IMR-90 (cell line): ENCODE measurements at regions of chr4 and their contacts with region 1.

Region 1: DNA sequence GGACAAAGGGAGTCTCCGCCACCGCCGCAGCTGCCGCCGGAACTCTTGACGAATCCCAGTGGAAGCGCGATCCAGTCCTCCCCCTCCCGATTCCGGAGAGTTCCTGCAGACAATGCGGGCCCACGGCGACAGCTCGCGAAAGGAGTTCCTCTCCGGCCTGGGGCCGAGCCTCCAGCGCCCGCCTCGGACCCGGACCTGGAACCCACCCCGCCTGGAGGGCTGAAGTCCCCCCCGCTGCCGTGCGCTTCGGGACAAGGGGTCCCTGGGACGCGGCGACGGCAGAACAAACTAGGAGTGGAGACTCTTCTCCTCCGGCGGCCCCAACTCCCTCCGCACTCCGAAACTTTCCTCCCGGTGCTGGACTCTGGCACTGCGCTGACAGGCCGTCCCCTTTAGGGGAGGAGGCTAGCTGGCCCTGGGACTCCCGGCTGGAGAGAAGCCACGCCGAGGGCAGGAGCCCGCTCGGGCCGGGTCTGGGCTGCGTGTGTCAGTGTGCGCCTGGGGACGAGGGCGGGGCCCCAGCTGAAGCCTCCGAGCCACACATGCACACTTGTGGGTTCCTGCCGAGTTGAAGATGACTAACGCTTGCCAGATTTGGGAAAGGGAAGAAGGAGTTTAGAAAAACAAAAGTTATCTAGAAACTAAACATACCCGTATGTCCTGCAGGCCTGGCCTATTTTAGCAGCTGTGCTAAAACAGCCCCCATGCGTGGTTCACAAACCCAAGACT is at the start of gene ANTXR2:
- DNase-seq: peak; percentile 98
- ATAC-seq: peak; percentile 90
- H3K4me3 ChIP-seq: peak within 1 kb of the TSS; percentile 85
- H3K27ac ChIP-seq: peak within 1 kb of the TSS; percentile 93
- H3K4me1 ChIP-seq: peaks cover 1% of the 10 kb centered on the region; the same call in 1 of the 2 replicates
- H3K27me3 ChIP-seq: no peaks in the 10 kb centered on the region
- CTCF ChIP-seq: 0 out of 2 replicates have a peak, but pooled peaks have one; percentile 12
- POLR2A ChIP-seq: peak; percentile 75
- RAD21 ChIP-seq: no peak
- total RNA-seq, gene ANTXR2: 88.5 and 115 TPM in 2 replicates

Region 2: DNA sequence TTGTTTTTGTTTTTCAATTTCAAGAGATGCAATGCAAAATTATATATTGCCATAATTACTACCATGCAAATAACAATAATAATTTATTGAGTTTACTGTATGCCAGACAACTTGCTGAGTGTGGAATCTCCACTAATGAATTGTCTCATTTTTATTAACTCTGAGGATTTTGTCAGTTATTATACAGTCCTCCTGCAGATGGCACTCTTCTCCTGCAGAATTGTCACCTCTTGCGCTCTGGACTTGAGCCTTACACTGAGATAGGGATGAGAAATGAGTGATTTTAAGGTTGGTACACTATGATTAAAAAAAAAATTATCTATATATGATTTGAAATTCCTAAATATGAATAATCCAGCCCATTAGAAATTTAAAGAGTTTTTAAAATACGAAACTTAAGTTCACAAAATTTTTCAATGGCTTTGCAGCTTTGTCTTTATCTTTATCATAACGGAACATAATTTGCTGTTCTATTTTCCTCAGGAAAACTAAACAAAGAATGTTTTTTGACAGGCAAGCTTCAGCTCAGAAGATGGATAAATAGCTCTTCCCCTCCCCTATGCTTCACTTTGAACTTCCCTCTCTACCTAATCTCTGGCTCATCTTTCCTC is 1120.9 kb before region 1 on chr4:
- CTCF ChIA-PET with region 1: no interaction called
- POLR2A ChIA-PET with region 1: no interaction called
- dilution Hi-C with region 1: no loop called
- in situ Hi-C with region 1: no loop called
- intact Hi-C with region 1: loop called (anchors 5 kb)
- DNase-seq: peak; percentile 45
- ATAC-seq: peak; percentile 80
- H3K4me3 ChIP-seq: no peak overlapping the region
- H3K27ac ChIP-seq: no peak overlapping the region
- H3K4me1 ChIP-seq: no peaks in the 10 kb centered on the region
- H3K27me3 ChIP-seq: peaks cover 5% of the 10 kb centered on the region
- CTCF ChIP-seq: peak; percentile 72
- POLR2A ChIP-seq: no peak
- RAD21 ChIP-seq: peak; percentile 77

Region 3: GRCh38 chr4:79241846-79242245 is 831.1 kb before region 1 on chr4:
- CTCF ChIA-PET with region 1: no interaction called
- POLR2A ChIA-PET with region 1: no interaction called
- dilution Hi-C with region 1: no loop called
- in situ Hi-C with region 1: no loop called
- intact Hi-C with region 1: loop called (anchors 5 kb)
- DNase-seq: peak; percentile 49
- ATAC-seq: peak; percentile 94
- H3K4me3 ChIP-seq: no peak overlapping the region
- H3K27ac ChIP-seq: no peak overlapping the region
- H3K4me1 ChIP-seq: peaks cover 1% of the 10 kb centered on the region; the same call in 1 of the 2 replicates
- H3K27me3 ChIP-seq: no peaks in the 10 kb centered on the region
- CTCF ChIP-seq: no peak
- POLR2A ChIP-seq: no peak
- RAD21 ChIP-seq: no peak

Region 4: DNA sequence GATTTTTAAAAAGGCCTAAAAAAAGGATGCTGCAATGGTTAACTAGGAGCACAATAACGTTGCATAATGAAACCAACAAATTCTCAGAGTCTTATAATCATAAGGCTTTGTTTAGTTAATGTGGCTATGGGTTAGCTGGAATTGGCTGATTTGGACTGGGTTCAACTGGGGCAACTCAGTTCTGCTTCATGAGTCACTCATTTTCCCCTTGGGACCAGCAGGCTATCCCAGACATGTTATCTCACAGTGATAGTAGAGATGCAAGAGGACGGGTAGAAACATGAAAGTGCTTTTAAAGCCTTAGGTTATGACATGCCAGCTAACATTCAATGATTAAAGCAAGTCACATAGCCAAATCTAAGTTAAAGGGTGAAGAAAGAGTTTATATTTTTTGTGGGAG is 475.6 kb before region 1 on chr4:
- CTCF ChIA-PET with region 1: no interaction called
- POLR2A ChIA-PET with region 1: no interaction called
- dilution Hi-C with region 1: no loop called
- in situ Hi-C with region 1: no loop called
- intact Hi-C with region 1: no loop called
- DNase-seq: peak; percentile 31
- ATAC-seq: peak; percentile 89
- H3K4me3 ChIP-seq: no peak overlapping the region
- H3K27ac ChIP-seq: no peak overlapping the region
- H3K4me1 ChIP-seq: no peaks in the 10 kb centered on the region
- H3K27me3 ChIP-seq: no peaks in the 10 kb centered on the region
- CTCF ChIP-seq: no peak
- POLR2A ChIP-seq: no peak
- RAD21 ChIP-seq: no peak

Region 5: DNA sequence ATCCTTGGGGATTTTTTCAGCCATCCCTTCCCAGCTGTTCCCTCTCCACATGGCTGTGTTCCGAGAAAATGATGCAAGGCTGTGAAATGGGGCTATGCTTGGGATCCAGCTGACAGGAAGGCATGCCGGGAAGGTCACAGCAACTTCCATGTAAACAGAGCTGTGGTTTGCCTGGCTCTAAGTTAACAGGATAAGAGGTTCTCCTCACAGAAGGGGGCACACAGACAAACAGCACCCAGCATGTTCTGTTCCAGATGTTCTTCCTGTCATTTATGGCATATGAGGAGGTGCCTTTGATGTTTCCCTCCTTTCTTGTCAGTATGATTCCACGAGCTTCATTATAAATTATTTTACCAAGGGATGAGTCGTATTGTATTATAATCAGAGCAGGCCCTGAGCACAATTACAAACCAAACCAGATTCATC is 220.6 kb before region 1 on chr4:
- CTCF ChIA-PET with region 1: interaction called, 3 read pairs
- POLR2A ChIA-PET with region 1: no interaction called
- dilution Hi-C with region 1: no loop called
- in situ Hi-C with region 1: no loop called
- intact Hi-C with region 1: loop called (anchors 10 kb)
- DNase-seq: peak; percentile 81
- ATAC-seq: peak; percentile 67
- H3K4me3 ChIP-seq: no peak overlapping the region
- H3K27ac ChIP-seq: peak overlapping the region; percentile 63; the same call in 1 of the 2 replicates
- H3K4me1 ChIP-seq: peaks cover 7% of the 10 kb centered on the region
- H3K27me3 ChIP-seq: no peaks in the 10 kb centered on the region
- CTCF ChIP-seq: no peak
- POLR2A ChIP-seq: no peak
- RAD21 ChIP-seq: no peak

Region 6: DNA sequence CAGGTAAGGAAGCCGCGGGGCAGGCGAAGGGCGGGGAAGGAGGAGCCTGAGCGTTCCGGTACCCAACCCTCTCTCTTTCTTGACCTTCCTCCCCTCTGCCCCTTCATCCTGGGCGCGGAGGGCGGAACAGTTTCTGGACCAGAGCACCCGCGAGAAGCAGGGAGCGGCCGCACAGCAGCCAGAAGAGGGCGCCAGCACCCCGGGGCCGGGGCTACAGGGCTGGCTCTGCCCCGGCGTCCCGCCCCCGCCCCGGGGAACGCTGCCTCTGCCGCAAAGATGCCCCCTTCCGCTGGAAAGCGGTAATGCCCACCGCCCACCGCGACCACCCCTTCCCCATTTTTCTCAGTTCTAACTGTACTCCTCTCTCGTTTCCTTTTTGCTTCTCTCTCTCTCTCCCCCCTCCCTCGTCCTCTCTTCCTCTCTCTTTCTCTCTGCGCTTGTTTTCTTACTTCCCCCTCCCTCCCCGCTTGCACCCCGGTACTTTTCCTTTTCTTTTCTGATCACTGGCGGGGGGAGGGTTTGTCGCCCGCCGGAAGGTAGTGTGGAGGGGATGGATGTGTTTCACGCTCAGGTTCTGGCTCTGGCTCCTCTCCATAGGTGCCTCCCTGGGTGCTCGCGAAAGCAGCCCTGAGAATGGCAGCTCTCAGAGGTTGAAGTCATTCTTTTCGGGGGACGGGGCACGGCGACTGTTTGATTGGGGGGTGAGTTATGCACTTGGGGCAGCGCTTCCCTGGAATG is 111.3 kb after region 1 on chr4:
- CTCF ChIA-PET with region 1: interaction called, 3 read pairs
- POLR2A ChIA-PET with region 1: no interaction called
- dilution Hi-C with region 1: no loop called
- in situ Hi-C with region 1: loop called (anchors 5 kb)
- intact Hi-C with region 1: loop called (anchors 1 kb)
- DNase-seq: peak; percentile 82
- ATAC-seq: peak; percentile 89
- H3K4me3 ChIP-seq: peak overlapping the region; percentile 84
- H3K27ac ChIP-seq: peak overlapping the region; percentile 91
- H3K4me1 ChIP-seq: peaks cover 9% of the 10 kb centered on the region
- H3K27me3 ChIP-seq: no peaks in the 10 kb centered on the region
- CTCF ChIP-seq: peak; percentile 99
- POLR2A ChIP-seq: no peak
- RAD21 ChIP-seq: peak; percentile 87